Left cardiac atrium (tissue), 4 donors: ENCODE measurements at regions of chr12 and their contacts with region 1.

Region 1: DNA sequence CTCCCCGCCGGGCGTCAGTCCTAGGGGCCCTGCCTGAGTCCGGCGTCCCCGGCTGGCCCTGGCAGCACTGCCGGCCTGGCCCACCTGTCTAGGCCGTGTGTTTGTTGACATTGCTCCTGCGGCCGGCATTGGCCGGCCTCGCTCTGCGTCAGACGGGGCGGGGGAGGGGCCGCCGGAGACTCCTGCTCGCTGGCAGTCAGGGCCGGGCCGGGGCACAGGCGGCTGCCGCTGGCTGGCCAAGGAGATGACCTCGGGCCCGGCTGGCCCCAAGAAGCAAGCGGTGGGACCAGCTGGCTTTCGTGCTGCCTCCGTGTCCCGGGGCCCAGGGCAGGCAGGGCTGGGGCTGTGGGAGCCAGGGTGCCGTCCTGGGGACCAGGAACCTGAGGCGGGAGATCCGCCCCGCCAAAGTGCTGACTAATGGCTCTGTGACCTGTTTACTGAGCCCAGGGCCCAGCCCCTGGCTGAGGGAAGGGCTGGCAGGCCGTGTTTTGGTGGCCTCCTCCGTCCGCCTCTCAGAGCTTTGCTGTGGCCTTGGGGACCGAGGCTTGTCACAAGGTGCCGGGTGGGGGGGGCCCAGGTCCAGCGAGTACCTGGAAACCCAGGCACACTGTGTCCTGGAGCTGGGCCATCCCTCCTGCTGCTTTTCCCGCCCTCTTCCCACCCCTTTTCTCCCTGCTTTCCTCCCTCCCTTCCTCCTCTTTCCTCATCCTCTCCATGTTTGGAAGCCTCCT is 1.8 kb downstream of the ULK1 start:
- DNase-seq: peak; percentile 94
- ATAC-seq: peak; percentile 89 to 91

Region 2: GRCh38 chr12:131860562-131861291 is 35.5 kb before region 1 on chr12:
- intact Hi-C with region 1: no loop called
- DNase-seq: peak; percentile 51
- ATAC-seq: peak; percentile 53 to 76

Region 3: GRCh38 chr12:131949431-131950181 is 53.4 kb after region 1 on chr12 and contains the start of gene EP400:
- intact Hi-C with region 1: loop called in 1 of 2 experiments (anchors 5 kb)
- DNase-seq: peak; percentile 98
- ATAC-seq: peak; percentile 97 to 99
- total RNA-seq, gene EP400: 15.7 to 21.1 TPM